ENCODE measurements at regions of chr6 and their contacts with region 1.

Region 1: DNA sequence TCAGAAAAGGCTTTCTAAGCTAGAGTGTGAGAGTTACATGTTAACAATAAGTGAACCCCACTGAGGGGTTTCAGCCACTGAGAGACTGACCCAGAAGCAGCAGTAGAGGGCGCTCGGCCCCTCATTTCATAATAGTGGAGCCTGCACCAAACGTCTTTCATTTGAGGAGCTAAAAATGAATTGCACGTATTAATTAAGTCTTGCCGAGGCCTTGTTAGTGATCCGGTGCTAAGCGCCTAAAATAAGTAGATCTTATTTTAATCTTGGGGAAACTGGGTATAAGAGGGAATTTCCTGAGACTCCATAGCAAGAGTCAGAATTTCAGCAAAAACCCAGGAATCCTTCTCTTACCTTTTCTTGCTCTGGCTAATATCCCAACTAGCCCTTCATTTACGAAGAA is 209.7 kb downstream of the FARS2 start:
- DNase-seq: peak; percentile 79
- ATAC-seq: peak; percentile 89
- H3K4me3 Mint-ChIP-seq: no peak overlapping the region
- H3K27ac Mint-ChIP-seq: no peak overlapping the region
- H3K4me1 Mint-ChIP-seq: peaks cover 4% of the 10 kb centered on the region
- H3K27me3 Mint-ChIP-seq: no peaks in the 10 kb centered on the region

Region 2: DNA sequence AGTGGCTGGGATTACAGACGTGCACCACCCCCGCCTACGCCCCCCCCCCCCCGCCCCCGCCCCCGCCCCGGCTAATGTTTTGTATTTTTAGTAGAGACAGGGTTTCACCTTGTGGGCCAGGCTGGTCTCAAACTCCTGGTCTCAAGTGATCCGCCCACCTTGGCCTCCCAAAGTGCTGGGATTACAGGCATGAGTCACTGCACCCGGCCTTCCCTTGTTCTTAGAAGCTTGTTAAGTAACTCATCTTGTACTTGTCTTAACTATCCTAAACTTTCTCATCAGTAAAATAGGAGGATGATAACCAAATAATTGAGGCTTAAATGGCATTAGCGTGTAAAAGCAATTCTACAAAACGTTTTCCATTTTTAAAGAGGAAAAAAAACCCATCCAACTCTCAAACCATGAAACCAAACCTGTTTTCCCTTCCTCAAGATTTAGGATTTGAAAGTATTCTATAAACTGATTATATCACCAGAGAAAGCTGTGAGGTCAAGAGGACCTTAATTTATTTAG is 690.6 kb before region 1 on chr6:
- CTCF ChIA-PET with region 1: no interaction called
- POLR2A ChIA-PET with region 1: no interaction called
- intact Hi-C with region 1: no loop called
- DNase-seq: no peak
- ATAC-seq: no peak
- H3K4me3 Mint-ChIP-seq: no peak overlapping the region
- H3K27ac Mint-ChIP-seq: no peak overlapping the region
- H3K4me1 Mint-ChIP-seq: peaks cover 60% of the 10 kb centered on the region
- H3K27me3 Mint-ChIP-seq: no peaks in the 10 kb centered on the region

Region 3: DNA sequence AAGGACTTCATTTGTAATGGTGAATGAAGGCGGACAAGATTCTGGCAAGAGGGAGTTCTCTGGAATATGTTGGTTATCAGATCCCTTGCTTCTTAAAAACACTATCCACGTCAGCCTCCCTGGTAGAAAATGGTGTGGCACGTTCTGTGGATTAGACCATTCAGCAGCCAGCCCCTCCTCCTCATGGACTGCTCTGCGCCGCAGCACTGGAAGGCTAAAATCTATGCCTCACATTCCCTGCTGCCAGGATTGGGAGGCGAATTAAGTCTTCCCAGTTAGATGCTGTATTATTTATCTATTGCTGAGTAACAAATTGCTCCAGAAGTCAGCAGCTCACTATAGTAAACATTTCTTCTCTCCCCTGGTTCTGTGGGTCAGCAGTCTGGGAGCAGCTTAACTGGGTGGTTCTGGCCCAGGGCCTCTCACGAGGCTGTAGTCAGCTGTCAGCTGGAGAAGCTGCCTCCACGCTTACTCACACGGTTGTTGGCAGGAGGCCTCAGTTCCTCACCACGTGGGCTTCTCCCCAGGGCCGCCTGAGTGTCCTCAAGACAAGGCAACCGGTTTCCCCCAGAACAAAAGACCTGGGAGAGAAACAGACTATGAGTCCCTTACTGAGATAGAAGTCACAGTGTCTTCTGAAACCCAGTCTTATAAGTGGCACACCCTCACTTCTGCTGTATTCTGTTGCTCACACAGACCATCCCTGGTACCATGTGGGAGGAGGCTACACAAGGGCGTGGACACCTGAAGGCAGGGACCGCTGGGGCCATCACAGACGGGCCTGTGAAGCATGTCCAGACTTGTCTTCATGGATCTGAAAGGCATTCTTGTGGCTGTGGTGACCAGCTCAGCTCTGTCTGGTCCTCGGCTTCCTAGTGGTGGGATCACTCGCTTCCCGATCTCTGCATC is 434.6 kb after region 1 on chr6:
- CTCF ChIA-PET with region 1: no interaction called
- POLR2A ChIA-PET with region 1: no interaction called
- intact Hi-C with region 1: no loop called
- DNase-seq: no peak
- ATAC-seq: no peak
- H3K4me3 Mint-ChIP-seq: no peak overlapping the region
- H3K27ac Mint-ChIP-seq: no peak overlapping the region
- H3K4me1 Mint-ChIP-seq: no peaks in the 10 kb centered on the region
- H3K27me3 Mint-ChIP-seq: no peaks in the 10 kb centered on the region

Region 4: DNA sequence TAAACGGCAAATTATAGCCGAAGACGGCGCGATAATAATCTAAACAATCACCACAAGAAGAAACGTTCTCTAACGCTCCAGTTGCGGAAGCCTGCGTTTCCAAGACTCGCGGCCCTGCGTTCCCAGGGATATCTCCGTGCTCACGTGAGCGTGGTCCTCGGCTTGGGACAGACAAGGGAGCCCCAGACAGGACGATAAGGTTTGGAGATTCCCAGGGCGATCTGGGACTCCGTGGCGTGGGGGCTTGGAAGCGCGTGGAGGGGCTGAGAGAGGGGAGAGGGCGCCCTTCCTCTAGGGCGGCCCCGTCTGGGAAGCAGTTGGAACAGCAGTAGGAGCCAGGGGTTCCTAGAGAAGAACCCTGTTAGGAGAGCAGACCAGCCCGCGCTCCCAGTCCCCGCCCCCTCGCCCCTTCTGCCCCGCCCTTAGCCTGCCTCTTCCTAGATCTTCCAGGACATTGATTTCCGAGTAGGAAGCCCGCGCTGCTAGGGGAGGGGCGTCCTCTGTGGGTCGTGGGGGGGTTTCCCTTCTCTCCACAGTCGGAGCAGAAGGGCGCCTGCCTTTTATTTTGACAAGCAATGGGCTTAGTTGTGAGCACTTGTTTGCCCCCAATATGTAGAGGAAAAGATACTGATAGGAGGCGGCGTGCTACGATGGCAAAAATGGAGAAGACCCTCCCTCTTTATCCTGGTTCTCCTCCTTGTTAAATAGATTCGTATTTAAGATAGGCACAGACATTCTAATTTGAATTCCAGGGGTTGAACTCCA is 525.1 kb after region 1 on chr6:
- CTCF ChIA-PET with region 1: interaction called, 4 read pairs
- POLR2A ChIA-PET with region 1: no interaction called
- intact Hi-C with region 1: loop called in 1 of 2 experiments (anchors 10 kb)
- DNase-seq: peak; percentile 44
- ATAC-seq: peak; percentile 18
- H3K4me3 Mint-ChIP-seq: peak overlapping the region; percentile 71
- H3K27ac Mint-ChIP-seq: peak overlapping the region; percentile 37
- H3K4me1 Mint-ChIP-seq: peaks cover 47% of the 10 kb centered on the region
- H3K27me3 Mint-ChIP-seq: peaks cover 70% of the 10 kb centered on the region